IMR-90 (cell line): ENCODE measurements at regions of chr6 and their contacts with region 1.

Region 1: GRCh38 chr6:21946298-21946783 is 350.5 kb downstream of the PRL start:
- DNase-seq: peak; percentile 98
- ATAC-seq: peak; percentile 84
- H3K4me3 ChIP-seq: no peak overlapping the region
- H3K27ac ChIP-seq: peak overlapping the region; percentile 70
- H3K4me1 ChIP-seq: peaks cover 19% of the 10 kb centered on the region
- H3K27me3 ChIP-seq: no peaks in the 10 kb centered on the region
- CTCF ChIP-seq: no peak
- POLR2A ChIP-seq: peak; percentile 87
- RAD21 ChIP-seq: no peak

Region 2: DNA sequence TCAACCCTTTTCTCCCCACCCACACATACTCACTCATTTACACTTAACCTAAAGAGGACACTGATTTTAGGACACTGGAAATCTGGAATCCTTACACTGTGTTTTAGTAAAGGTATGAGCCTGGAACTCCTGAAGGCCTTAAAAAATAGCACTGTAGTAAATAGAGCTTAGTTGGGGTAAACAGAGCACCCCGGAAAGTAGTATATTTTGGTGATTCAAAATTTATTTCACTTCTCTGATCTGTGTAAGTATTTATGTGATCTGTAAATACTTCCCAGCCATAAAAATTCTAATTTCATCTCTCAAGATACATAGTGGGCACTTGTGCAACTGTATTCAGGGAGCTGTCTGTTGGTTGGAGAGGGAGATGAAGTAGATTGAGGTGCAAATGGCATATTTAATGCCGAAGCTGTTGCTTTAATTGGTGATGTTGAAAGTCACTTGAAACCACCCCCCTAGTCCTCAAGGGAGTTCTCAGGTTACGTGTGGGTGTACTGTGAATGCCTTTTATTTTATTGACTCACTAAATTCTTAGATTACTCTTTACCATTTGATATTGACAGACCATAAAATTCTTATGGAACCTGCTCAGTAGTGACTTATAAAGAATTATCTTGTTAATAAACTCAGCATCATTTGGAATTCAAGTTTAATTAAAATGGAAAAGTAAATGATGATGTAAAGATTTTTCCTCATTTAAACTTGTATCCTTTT is 197.8 kb before region 1 on chr6:
- CTCF ChIA-PET with region 1: no interaction called
- POLR2A ChIA-PET with region 1: no interaction called
- dilution Hi-C with region 1: no loop called
- in situ Hi-C with region 1: no loop called
- intact Hi-C with region 1: no loop called
- DNase-seq: peak; percentile 61
- ATAC-seq: peak; percentile 41
- H3K4me3 ChIP-seq: no peak overlapping the region
- H3K27ac ChIP-seq: no peak overlapping the region
- H3K4me1 ChIP-seq: peaks cover 12% of the 10 kb centered on the region
- H3K27me3 ChIP-seq: no peaks in the 10 kb centered on the region
- CTCF ChIP-seq: no peak
- POLR2A ChIP-seq: no peak
- RAD21 ChIP-seq: no peak

Region 3: DNA sequence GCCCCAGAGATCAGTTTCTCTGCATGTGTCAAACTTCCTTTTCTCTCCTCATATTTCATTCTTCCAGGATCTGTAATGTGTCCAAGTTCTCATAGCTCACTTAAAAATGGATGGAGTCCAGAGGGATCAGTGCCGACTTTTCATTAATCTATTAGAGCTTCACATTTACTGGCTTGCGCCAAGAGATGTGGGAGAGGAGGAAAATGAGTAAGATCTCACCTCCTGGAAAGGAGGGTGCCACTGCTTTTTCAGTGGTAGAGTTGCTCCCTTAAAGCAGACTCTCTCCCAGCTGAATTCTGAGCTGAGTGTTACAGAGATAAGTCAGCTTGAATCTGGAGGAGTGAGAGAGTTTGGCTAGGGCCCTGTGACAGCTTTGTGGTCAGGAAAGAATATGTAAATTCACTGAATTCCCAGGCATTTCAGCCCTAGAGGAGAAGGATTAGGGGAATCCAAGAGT is 176.9 kb before region 1 on chr6:
- CTCF ChIA-PET with region 1: no interaction called
- POLR2A ChIA-PET with region 1: no interaction called
- dilution Hi-C with region 1: no loop called
- in situ Hi-C with region 1: no loop called
- intact Hi-C with region 1: loop called (anchors 5 kb)
- DNase-seq: peak; percentile 98
- ATAC-seq: peak; percentile 84
- H3K4me3 ChIP-seq: no peak overlapping the region
- H3K27ac ChIP-seq: peak overlapping the region; percentile 41; the same call in 1 of the 2 replicates
- H3K4me1 ChIP-seq: peaks cover 6% of the 10 kb centered on the region
- H3K27me3 ChIP-seq: no peaks in the 10 kb centered on the region
- CTCF ChIP-seq: no peak
- POLR2A ChIP-seq: peak; percentile 68; the same call in 1 of the 2 replicates
- RAD21 ChIP-seq: no peak

Region 4: DNA sequence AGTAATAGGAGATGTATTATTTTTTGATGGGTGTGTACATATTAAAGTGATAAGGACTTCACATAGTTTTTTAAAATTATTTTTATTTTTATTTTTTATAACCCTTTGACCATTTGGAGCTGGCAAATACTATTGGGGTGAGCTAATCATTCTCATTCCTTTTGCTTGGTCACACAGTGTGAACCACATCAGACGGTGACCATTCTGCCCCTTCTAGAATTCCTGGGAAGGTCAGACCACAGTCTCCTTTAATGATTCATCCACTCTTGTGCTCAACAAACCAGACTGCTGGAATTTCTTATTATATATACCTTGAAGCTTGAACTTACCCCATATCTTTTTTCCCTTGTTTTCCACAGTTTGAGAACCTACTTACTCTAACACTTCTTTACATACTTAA is 374.4 kb after region 1 on chr6:
- CTCF ChIA-PET with region 1: no interaction called
- POLR2A ChIA-PET with region 1: no interaction called
- dilution Hi-C with region 1: no loop called
- in situ Hi-C with region 1: no loop called
- intact Hi-C with region 1: loop called (anchors 5 kb)
- DNase-seq: peak; percentile 93
- ATAC-seq: peak; percentile 94
- H3K4me3 ChIP-seq: no peak overlapping the region
- H3K27ac ChIP-seq: no peak overlapping the region
- H3K4me1 ChIP-seq: peaks cover 15% of the 10 kb centered on the region
- H3K27me3 ChIP-seq: no peaks in the 10 kb centered on the region
- CTCF ChIP-seq: no peak
- POLR2A ChIP-seq: no peak
- RAD21 ChIP-seq: no peak